ENCODE measurements at regions of chr4 and their contacts with region 1.

Region 1: DNA sequence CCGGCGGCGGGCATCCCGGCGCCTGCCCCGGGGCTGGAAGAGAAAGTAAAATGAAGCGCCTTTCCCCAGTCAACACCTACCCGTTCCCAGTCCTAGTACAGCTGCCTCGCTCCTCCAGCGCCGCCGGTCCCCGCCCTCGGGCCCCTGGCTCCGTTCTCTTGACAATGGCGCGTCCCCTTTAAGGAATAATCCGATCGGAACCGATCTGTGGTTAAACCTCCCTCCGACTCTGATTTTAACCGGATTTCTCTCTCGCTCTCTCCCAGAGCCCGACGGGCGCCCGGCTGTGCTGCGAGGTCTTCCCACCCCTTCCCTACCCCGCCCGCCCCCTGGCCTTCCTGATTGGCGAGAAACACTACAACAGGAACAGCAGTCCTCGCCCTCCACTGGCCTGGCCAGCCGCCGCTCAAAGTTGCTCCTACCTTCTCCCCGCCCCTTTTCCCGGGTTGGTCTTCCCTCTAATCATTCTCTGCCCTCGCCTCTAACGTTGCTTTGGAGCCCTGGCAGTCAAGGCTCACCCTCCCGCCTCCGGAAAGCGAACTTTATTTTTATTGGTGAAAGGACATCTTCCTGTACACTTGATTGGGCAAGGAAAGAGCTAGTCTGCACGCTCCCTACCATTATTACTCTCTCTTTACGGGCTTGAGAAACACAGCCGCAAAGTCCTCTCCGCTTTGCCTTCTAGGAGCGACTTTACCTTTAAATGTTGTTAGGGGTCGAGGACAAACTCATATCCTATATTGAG is at the start of gene FRYL:
- DNase-seq: peak; percentile 100
- H3K4me3 ChIP-seq: peak within 1 kb of the TSS; percentile 90 to 95 (median 95)
- H3K27ac ChIP-seq: peak within 1 kb of the TSS; percentile 92
- H3K4me1 ChIP-seq: peaks cover 26% of the 10 kb centered on the region
- H3K27me3 ChIP-seq: no peaks in the 10 kb centered on the region
- CTCF ChIP-seq: no peak
- POLR2A ChIP-seq: peak; percentile 48
- total RNA-seq, gene FRYL: 79.8 and 84.9 TPM in 2 replicates

Region 2: DNA sequence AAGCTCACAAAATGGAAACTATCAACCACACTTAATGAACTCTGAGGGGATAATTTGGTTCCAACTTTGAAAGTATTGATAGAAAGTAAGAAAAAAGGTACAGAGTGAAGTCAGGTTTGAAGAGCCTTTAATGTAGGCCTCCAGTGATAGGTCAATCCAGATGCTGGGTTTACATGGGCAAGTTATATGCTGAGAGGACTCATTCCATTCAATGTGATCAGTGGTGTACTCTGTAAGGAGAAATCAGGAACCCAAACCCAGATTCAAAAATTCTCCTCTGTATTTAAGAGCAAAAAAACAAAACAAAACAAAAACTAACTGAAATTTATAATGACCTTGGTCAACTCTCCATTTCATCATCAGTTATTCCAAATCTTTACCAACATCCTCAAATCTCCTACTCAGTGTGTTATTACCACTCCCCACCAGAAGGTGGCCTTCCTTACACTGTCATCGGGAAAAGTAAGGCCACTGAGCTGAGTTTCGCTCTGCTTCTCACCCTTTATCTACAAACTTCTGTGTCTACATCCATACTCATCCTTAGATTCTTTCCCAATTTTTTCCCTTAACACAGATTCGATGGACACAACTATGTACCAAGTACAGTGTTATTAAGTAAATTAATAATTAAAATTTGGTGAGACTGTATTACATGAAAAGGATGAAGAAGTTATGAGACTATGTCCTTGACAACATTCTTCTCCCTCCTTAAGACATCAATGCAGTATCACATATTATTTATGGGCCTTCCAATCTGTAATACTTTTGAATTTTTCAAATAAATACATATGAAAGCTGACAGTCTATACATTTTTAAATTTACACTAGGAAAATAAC is 201.8 kb before region 1 on chr4:
- CTCF ChIA-PET with region 1: interaction called, 41 read pairs
- POLR2A ChIA-PET with region 1: no interaction called
- dilution Hi-C with region 1: no loop called
- intact Hi-C with region 1: loop called (anchors 1 kb)
- DNase-seq: peak; percentile 77
- H3K4me3 ChIP-seq: no peak overlapping the region
- H3K27ac ChIP-seq: no peak overlapping the region
- H3K4me1 ChIP-seq: no peaks in the 10 kb centered on the region
- H3K27me3 ChIP-seq: no peaks in the 10 kb centered on the region
- CTCF ChIP-seq: peak; percentile 60 to 69
- POLR2A ChIP-seq: no peak

Region 3: GRCh38 chr4:48681856-48682255 is 98.3 kb before region 1 on chr4:
- CTCF ChIA-PET with region 1: interaction called, 4 read pairs
- POLR2A ChIA-PET with region 1: no interaction called
- dilution Hi-C with region 1: no loop called
- intact Hi-C with region 1: loop called (anchors 2 kb)
- DNase-seq: peak; percentile 73
- H3K4me3 ChIP-seq: no peak overlapping the region
- H3K27ac ChIP-seq: no peak overlapping the region
- H3K4me1 ChIP-seq: peaks cover 9% of the 10 kb centered on the region
- H3K27me3 ChIP-seq: no peaks in the 10 kb centered on the region
- CTCF ChIP-seq: peak; percentile 8 to 33
- POLR2A ChIP-seq: no peak

Region 4: GRCh38 chr4:48722509-48723446 is 57.4 kb before region 1 on chr4:
- CTCF ChIA-PET with region 1: no interaction called
- POLR2A ChIA-PET with region 1: no interaction called
- dilution Hi-C with region 1: no loop called
- intact Hi-C with region 1: loop called (anchors 10 kb)
- DNase-seq: peak; percentile 83
- H3K4me3 ChIP-seq: peak overlapping the region in 1 of 3 experiments; percentile 32
- H3K27ac ChIP-seq: peak overlapping the region; percentile 71
- H3K4me1 ChIP-seq: peaks cover 45% of the 10 kb centered on the region
- H3K27me3 ChIP-seq: no peaks in the 10 kb centered on the region
- CTCF ChIP-seq: no peak
- POLR2A ChIP-seq: no peak

Region 5: GRCh38 chr4:48801734-48802133 is 21.6 kb after region 1 on chr4:
- CTCF ChIA-PET with region 1: no interaction called
- POLR2A ChIA-PET with region 1: interaction called, 4 read pairs
- dilution Hi-C with region 1: no loop called
- intact Hi-C with region 1: loop called (anchors 1 kb)
- DNase-seq: peak; percentile 94
- H3K4me3 ChIP-seq: peak overlapping the region in 1 of 3 experiments; percentile 19
- H3K27ac ChIP-seq: peak overlapping the region; percentile 43
- H3K4me1 ChIP-seq: peaks cover 36% of the 10 kb centered on the region
- H3K27me3 ChIP-seq: no peaks in the 10 kb centered on the region
- CTCF ChIP-seq: no peak
- POLR2A ChIP-seq: no peak

Region 6: GRCh38 chr4:48963042-48963679 is 183.0 kb after region 1 on chr4:
- CTCF ChIA-PET with region 1: interaction called, 3 read pairs
- POLR2A ChIA-PET with region 1: interaction called, 5 read pairs
- dilution Hi-C with region 1: no loop called
- intact Hi-C with region 1: loop called (anchors 1 kb)
- DNase-seq: peak; percentile 90
- H3K4me3 ChIP-seq: no peak overlapping the region
- H3K27ac ChIP-seq: no peak overlapping the region
- H3K4me1 ChIP-seq: no peaks in the 10 kb centered on the region
- H3K27me3 ChIP-seq: peaks cover 5 to 12% of the 10 kb centered on the region in 2 experiments
- CTCF ChIP-seq: peak; percentile 88 to 99
- POLR2A ChIP-seq: no peak